Activated CD8-positive, alpha-beta memory T cell treated with anti-CD3 and anti-CD28 coated beads, Interleukin-2, amount 10 ng/mL, durations not matched to agents 7 days and 5 days (primary cell): ENCODE measurements at regions of chr1 and their contacts with region 1.

Region 1: DNA sequence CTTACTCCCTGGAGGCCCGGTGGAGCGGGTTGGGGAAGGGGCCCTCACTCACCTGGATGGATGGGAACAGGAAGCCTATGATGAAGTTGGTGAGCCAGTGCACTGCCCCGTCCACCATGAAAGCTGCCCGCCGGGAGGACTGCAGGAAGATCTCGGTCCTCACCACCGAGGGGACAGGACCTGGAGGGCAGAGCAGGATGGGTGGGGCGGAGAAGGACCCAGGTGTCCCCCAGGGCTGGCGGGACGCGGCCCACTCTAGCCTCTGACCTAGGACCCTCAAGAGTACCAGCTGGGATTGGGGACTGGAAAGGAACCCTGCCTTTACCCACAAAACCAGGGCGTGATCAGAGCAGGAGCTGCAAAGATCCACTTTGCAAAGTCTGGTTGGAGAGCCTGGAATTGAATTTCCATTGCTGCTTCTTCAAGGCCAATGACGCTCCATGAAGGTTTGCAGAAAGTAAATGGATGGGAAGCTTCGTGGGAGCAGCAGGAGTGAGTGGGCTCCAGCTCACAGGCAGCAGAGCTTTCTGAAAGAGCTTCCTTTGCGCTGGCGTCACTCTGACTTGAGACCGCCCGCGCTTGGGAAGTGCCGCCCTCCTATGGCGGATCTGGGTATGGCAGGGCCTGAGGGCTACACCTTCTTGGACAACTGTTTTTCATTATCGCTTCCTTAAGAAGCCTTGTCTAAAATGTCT is 21.4 kb downstream of the SLC2A7 start:
- DNase-seq: peak; percentile 90
- ATAC-seq: peak; percentile 94
- H3K4me3 Mint-ChIP-seq: no peak overlapping the region
- H3K27ac Mint-ChIP-seq: peak overlapping the region; percentile 25
- H3K4me1 Mint-ChIP-seq: peaks cover 14% of the 10 kb centered on the region
- H3K27me3 Mint-ChIP-seq: peaks cover 13% of the 10 kb centered on the region

Region 2: GRCh38 chr1:8903908-8904650 is 100.8 kb before region 1 on chr1:
- CTCF ChIA-PET with region 1: interaction called, 38 read pairs
- DNase-seq: no peak
- ATAC-seq: no peak
- H3K4me3 Mint-ChIP-seq: no peak overlapping the region
- H3K27ac Mint-ChIP-seq: no peak overlapping the region
- H3K4me1 Mint-ChIP-seq: peaks cover 39% of the 10 kb centered on the region
- H3K27me3 Mint-ChIP-seq: peaks cover 2% of the 10 kb centered on the region

Region 3: GRCh38 chr1:8941906-8942305 is 62.9 kb before region 1 on chr1:
- CTCF ChIA-PET with region 1: interaction called, 39 read pairs
- DNase-seq: no peak
- ATAC-seq: no peak
- H3K4me3 Mint-ChIP-seq: peak overlapping the region; percentile 33
- H3K27ac Mint-ChIP-seq: peak overlapping the region; percentile 74
- H3K4me1 Mint-ChIP-seq: peaks cover 88% of the 10 kb centered on the region
- H3K27me3 Mint-ChIP-seq: no peaks in the 10 kb centered on the region

Region 4: DNA sequence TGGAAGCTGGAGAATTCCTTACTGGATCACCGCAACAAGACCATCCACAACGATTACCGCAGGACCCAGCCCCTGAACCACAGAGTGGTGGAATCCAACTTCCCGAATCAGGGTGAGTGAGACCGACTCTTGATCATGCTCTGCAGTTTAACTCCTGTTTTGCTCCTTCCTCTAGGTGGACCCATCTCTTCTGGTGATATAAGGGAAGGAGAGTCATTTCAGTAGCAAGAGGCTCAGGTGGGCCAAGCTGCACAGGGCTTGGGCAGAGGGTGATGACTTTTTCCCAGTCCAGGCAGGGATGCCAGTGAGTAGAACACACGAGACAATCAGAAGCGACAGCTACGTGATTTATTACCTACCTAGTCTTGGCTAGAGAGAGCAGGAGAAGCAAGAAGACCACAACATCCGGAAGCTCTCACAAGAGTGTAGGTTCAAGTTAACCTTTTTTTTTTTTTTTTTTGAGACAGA is 33.9 kb before region 1 on chr1:
- CTCF ChIA-PET with region 1: interaction called, 42 read pairs
- DNase-seq: peak; percentile 78
- ATAC-seq: peak; percentile 87
- H3K4me3 Mint-ChIP-seq: peak overlapping the region; percentile 80
- H3K27ac Mint-ChIP-seq: peak overlapping the region; percentile 91
- H3K4me1 Mint-ChIP-seq: peaks cover 46% of the 10 kb centered on the region
- H3K27me3 Mint-ChIP-seq: no peaks in the 10 kb centered on the region

Region 5: DNA sequence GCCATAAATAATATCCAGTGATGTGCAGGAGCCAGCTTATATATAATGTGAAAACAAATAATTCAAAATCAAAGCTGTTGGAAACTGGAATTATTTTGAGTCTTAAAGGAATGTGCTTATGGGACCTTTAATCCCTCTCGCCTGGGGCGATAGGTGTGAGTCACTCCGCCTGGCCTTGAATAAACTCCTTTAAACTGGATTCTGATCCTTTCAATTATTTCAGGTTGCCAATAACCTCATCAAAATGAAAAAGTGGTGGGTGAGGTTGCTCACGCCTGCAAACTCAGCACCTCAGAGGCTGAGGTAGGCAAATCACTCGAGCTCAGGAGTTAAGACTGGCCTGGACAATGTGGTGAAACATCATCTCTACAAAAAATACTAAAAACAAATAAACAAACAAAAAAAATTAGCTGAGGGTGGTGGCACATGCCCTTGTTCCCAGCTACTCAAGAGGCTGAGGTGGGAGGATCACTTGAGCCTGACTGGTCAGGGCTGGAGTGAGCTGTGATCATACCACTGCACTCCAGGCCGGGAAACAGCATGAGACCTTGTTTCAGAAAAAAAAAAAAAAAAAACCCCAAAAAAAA is 76.0 kb after region 1 on chr1:
- CTCF ChIA-PET with region 1: interaction called, 10 read pairs
- DNase-seq: no peak
- ATAC-seq: no peak
- H3K4me3 Mint-ChIP-seq: no peak overlapping the region
- H3K27ac Mint-ChIP-seq: no peak overlapping the region
- H3K4me1 Mint-ChIP-seq: peaks cover 53% of the 10 kb centered on the region
- H3K27me3 Mint-ChIP-seq: peaks cover 46% of the 10 kb centered on the region

Region 6: GRCh38 chr1:9292361-9293240 is 287.8 kb after region 1 on chr1 and contains the start of gene SPSB1:
- CTCF ChIA-PET with region 1: no interaction called
- DNase-seq: peak; percentile 75
- ATAC-seq: peak; percentile 72
- H3K4me3 Mint-ChIP-seq: peak within 1 kb of the TSS; percentile 40
- H3K27ac Mint-ChIP-seq: no peak within 1 kb of the TSS
- H3K4me1 Mint-ChIP-seq: peaks cover 9% of the 10 kb centered on the region
- H3K27me3 Mint-ChIP-seq: peaks cover 15% of the 10 kb centered on the region
- total RNA-seq, gene SPSB1: 8.2 to 9.0 TPM